Sigmoid colon (tissue), 7 donors: ENCODE measurements at regions of chr12 and their contacts with region 1.

Region 1: GRCh38 chr12:20272801-20273200 is 95.5 kb upstream of the PDE3A start:
- DNase-seq: no peak
- H3K4me3 ChIP-seq: no peak overlapping the region
- H3K27ac ChIP-seq: peak overlapping the region; percentile 59 to 74 (median 67)
- H3K4me1 ChIP-seq: peaks cover 0 to 64% (median 32%) of the 10 kb centered on the region in 4 donors
- H3K27me3 ChIP-seq: no peaks in the 10 kb centered on the region
- CTCF ChIP-seq: no peak
- EP300 ChIP-seq: no peak
- POLR2A ChIP-seq: no peak

Region 2: GRCh38 chr12:20105943-20106342 is 166.9 kb before region 1 on chr12:
- intact Hi-C with region 1: no loop called
- DNase-seq: no peak
- H3K4me3 ChIP-seq: no peak overlapping the region
- H3K27ac ChIP-seq: peak overlapping the region in 2 of 4 donors; percentile 26 to 27
- H3K4me1 ChIP-seq: peaks cover 0 to 53% (median 28%) of the 10 kb centered on the region in 4 donors
- H3K27me3 ChIP-seq: no peaks in the 10 kb centered on the region
- CTCF ChIP-seq: no peak
- EP300 ChIP-seq: no peak
- POLR2A ChIP-seq: no peak

Region 3: GRCh38 chr12:20232931-20233675 is 39.7 kb before region 1 on chr12:
- intact Hi-C with region 1: no loop called
- DNase-seq: no peak
- H3K4me3 ChIP-seq: no peak overlapping the region
- H3K27ac ChIP-seq: no peak overlapping the region
- H3K4me1 ChIP-seq: no peaks in the 10 kb centered on the region
- H3K27me3 ChIP-seq: no peaks in the 10 kb centered on the region
- CTCF ChIP-seq: no peak
- EP300 ChIP-seq: no peak
- POLR2A ChIP-seq: no peak

Region 4: DNA sequence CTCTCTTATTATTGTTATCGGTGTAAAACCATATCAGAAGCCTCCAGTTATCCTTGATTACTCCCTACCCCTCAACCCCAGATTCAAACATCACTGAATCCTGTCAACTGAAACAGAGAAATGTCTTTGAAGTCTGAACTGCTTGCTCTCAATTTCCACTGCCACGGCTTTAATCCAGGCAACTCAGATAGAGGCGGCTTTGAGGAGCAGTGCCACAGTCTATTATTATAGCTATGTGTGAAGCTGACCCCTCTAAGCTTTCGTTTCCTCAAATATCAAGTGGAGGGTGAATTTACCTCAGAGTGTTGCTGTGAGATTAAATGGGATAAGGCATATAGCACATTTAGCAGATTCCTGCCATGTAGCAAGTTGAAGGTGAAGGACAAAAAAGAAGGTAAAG is 46.6 kb after region 1 on chr12:
- intact Hi-C with region 1: no loop called
- DNase-seq: no peak
- H3K4me3 ChIP-seq: no peak overlapping the region
- H3K27ac ChIP-seq: no peak overlapping the region
- H3K4me1 ChIP-seq: no peaks in the 10 kb centered on the region
- H3K27me3 ChIP-seq: no peaks in the 10 kb centered on the region
- CTCF ChIP-seq: no peak
- EP300 ChIP-seq: no peak
- POLR2A ChIP-seq: no peak

Region 5: GRCh38 chr12:20350495-20350894 is 77.7 kb after region 1 on chr12:
- intact Hi-C with region 1: loop called (anchors 5 kb)
- DNase-seq: no peak
- H3K4me3 ChIP-seq: no peak overlapping the region
- H3K27ac ChIP-seq: peak overlapping the region; percentile 51 to 83 (median 78)
- H3K4me1 ChIP-seq: peaks cover 0 to 28% (median 13%) of the 10 kb centered on the region in 4 donors
- H3K27me3 ChIP-seq: no peaks in the 10 kb centered on the region
- CTCF ChIP-seq: no peak
- EP300 ChIP-seq: no peak
- POLR2A ChIP-seq: no peak

Region 6: DNA sequence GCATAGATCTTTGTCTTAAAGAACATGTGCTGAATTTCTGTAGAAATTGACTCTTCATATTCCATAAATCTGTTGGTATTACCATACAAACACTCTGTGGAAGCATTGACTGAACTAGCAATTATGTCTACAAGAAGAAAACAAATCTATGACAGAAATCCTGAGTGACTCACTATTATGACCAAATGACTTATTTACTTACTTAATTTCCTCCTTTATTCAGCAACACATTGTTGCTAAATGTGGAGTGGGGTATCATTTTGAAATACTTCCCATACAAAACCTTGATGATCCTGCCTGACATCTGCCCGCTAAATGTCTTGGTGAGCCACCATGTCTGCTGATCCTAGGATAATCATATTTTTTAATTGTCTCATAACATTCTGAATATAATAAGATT is 323.3 kb after region 1 on chr12:
- intact Hi-C with region 1: loop called (anchors 10 kb)
- DNase-seq: no peak
- H3K4me3 ChIP-seq: no peak overlapping the region
- H3K27ac ChIP-seq: no peak overlapping the region
- H3K4me1 ChIP-seq: peaks cover 0 to 41% (median 20%) of the 10 kb centered on the region in 4 donors
- H3K27me3 ChIP-seq: no peaks in the 10 kb centered on the region
- CTCF ChIP-seq: no peak
- EP300 ChIP-seq: no peak
- POLR2A ChIP-seq: no peak